T47D (cell line): ENCODE measurements at regions of chr12 and their contacts with region 1.

Region 1: GRCh38 chr12:54191550-54192022 is 2.8 kb upstream of the SMUG1 start:
- DNase-seq: peak; percentile 77 to 92

Region 2: GRCh38 chr12:54005853-54006686 is 185.5 kb before region 1 on chr12:
- in situ Hi-C with region 1: loop called (anchors 25 kb)
- DNase-seq: peak; percentile 91 to 99

Region 3: DNA sequence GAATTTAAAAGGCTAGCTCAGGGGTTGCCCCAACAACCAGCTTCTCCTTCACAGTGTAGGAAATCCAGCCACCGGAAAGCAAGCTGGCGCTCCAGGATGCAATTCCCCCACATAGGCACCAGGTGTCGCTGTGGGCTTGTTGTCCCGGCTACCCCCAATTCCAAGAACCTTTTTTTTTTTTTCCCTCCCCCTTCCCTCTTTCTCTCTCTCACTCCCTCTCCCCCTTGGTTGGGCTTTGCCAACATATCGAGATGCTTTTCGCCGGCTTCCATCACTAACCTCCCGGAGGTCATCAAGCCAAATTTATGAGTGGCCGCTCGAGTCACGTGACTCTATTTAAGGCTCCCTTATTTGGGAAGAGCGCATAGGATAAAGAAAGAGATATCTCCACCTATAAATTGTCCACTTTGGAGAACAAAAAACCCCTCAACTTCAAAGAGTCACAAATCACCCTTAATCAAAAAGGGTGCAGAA is 158.9 kb before region 1 on chr12 and contains the start of gene HOXC5:
- in situ Hi-C with region 1: no loop called
- DNase-seq: peak; percentile 79 to 99